ENCODE measurements at regions of chr13 and their contacts with region 1.

Region 1: GRCh38 chr13:51961493-51962403 is 49.5 kb downstream of the ATP7B start:
- DNase-seq: no peak
- H3K4me3 Mint-ChIP-seq: no peak overlapping the region
- H3K27ac Mint-ChIP-seq: no peak overlapping the region
- H3K4me1 Mint-ChIP-seq: peaks cover 18% of the 10 kb centered on the region
- H3K27me3 Mint-ChIP-seq: no peaks in the 10 kb centered on the region

Region 2: DNA sequence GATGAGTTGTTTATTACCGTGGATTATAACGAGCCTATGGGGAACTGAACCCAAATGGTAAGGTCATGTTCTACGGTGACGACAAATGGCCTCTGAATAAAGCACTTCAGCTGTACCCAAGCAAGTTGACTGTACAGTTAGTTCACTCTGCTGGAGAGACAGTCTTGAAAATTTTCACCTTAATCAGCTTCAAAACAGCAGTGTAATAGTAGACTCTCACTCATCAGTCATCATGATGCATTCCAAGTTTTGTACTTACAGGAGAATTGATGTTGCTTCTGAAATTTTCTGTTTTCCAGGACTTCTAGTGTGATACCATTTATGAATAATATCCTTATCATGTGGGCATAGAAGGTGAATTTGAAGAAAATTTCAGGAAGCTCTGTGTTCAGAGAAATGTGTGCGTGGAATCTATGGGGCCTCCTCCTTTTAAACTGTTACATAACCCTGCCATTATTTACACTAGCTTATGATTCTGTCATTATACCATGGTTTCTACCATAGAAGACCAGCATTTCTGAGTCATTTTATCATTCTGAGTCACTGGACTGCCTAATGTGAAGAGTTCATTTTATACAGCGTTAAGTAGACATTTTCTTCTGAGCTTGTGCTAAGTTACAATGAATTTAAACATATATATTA is 280.6 kb before region 1 on chr13:
- CTCF ChIA-PET with region 1: no interaction called
- intact Hi-C with region 1: no loop called
- DNase-seq: no peak
- H3K4me3 Mint-ChIP-seq: no peak overlapping the region
- H3K27ac Mint-ChIP-seq: no peak overlapping the region
- H3K4me1 Mint-ChIP-seq: peaks cover 13% of the 10 kb centered on the region
- H3K27me3 Mint-ChIP-seq: no peaks in the 10 kb centered on the region

Region 3: GRCh38 chr13:51929689-51930088 is 32.1 kb before region 1 on chr13:
- CTCF ChIA-PET with region 1: no interaction called
- intact Hi-C with region 1: no loop called
- DNase-seq: no peak
- H3K4me3 Mint-ChIP-seq: no peak overlapping the region
- H3K27ac Mint-ChIP-seq: no peak overlapping the region
- H3K4me1 Mint-ChIP-seq: peaks cover 5% of the 10 kb centered on the region
- H3K27me3 Mint-ChIP-seq: no peaks in the 10 kb centered on the region

Region 4: GRCh38 chr13:51971520-51972426 is 10.0 kb after region 1 on chr13:
- CTCF ChIA-PET with region 1: interaction called, 10 read pairs
- intact Hi-C with region 1: no loop called
- DNase-seq: no peak
- H3K4me3 Mint-ChIP-seq: no peak overlapping the region
- H3K27ac Mint-ChIP-seq: no peak overlapping the region
- H3K4me1 Mint-ChIP-seq: peaks cover 31% of the 10 kb centered on the region
- H3K27me3 Mint-ChIP-seq: no peaks in the 10 kb centered on the region

Region 5: GRCh38 chr13:52738719-52739467 is 777.1 kb after region 1 on chr13:
- CTCF ChIA-PET with region 1: no interaction called
- intact Hi-C with region 1: no loop called
- DNase-seq: no peak
- H3K4me3 Mint-ChIP-seq: peak overlapping the region; percentile 26
- H3K27ac Mint-ChIP-seq: no peak overlapping the region
- H3K4me1 Mint-ChIP-seq: peaks cover 6% of the 10 kb centered on the region
- H3K27me3 Mint-ChIP-seq: peaks cover 56% of the 10 kb centered on the region